G401 (cell line): ENCODE measurements at regions of chr10 and their contacts with region 1.

Region 1: DNA sequence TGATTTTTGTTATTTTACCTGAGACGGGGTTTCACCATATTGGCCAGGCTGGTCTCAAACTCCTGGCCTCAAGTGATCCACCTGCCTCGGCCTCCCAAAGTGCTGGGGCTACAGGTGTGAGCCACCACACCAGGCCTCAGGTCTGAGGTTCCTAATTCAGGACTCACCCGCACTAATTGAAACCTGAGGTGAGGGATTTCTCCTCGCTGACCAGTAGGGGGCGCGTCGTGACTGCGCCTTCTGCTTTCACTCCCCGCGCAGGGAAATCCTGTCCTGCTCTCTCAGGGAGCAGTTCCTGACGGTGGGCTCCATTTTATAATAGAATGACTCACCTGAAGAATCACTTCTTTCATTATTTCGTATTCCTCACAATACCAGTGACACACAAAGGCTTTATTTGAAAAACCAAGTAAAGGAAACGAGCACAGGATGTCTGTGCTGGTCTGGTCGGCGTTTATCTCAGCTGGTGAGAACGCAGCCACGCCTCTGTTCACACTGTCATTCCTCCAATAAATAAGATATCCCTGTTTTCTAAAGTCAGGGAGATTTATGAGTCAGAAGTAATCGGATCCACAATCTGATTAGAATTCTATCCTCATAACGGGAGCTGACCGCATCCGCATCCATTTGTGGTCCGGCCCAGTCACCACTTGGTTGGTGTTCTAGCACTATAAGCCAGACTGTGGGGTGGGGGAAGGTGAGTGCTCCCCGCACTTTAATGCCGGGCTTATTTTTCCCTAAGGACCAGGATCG is 35.4 kb downstream of the BAG3 start:
- DNase-seq: peak; percentile 86

Region 2: GRCh38 chr10:119022846-119023552 is 663.6 kb before region 1 on chr10:
- in situ Hi-C with region 1: no loop called
- DNase-seq: no peak

Region 3: DNA sequence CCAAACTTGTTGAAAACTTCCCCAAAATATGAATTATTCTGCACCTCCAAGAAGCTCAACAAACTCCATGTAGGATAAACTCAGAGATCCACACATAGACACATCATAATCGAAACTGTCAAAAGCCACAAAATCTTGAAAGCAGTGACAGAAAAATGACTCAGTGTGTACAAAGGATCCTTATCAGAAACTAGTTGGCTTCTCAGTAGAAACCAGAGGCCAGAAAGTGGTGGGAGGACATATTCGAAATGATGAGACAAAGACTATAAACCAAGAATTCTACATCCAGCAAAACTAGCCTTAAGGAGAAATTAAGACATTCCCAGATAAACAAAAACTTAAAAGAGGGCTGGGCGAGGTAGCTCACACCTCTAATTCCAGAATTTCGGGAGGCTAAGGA is 147.6 kb after region 1 on chr10:
- in situ Hi-C with region 1: loop called (anchors 10 kb)
- DNase-seq: no peak